Activated B cell treated with CpG ODN at 0.5 μM for 24 hours (primary cell): ENCODE measurements at regions of chr14 and their contacts with region 1.

Region 1: DNA sequence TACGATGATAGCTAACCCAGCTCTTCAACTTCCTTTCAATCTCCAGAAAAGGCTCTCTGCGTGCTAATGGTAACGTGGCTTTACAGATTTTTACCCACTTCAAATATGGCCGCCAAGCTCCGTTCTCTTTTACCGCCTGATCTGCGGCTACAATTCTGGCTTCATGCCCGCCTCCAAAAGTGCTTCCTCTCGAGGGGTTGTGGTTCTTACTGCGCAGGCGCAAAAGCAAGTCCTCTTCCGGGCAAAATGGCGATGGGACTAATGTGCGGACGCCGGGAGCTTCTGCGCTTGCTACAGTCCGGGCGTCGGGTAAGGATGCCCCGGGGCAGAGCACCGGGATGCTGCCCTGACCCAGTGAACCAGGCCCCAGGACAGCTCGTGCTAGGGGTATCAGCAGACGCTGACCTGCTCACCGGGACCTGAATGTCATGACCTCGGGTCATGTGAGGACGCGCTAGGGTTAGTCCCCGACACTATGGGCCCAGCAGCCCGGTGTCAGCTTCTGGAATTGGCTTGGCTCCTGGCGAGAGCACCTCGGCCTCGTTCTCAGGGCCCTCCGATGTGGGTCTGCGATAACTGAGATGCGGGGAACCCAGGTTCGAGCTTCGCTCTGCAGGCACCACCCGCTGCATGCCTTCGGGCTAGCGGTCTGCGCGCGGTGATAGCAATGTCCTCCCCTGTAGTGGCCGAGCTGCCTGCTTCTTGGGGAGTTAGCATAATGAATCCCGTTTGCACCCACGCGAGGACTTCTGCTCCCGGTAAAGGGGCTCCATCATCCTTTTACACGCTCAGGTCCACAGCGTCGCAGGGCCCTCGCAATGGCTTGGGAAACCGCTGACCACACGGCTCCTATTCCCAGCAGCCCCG is at the start of gene OXA1L:
- DNase-seq: peak; percentile 79
- ATAC-seq: peak; percentile 89
- H3K4me3 Mint-ChIP-seq: peak within 1 kb of the TSS; percentile 93
- H3K27ac Mint-ChIP-seq: peak within 1 kb of the TSS; percentile 97
- H3K4me1 Mint-ChIP-seq: peaks cover 35% of the 10 kb centered on the region
- H3K27me3 Mint-ChIP-seq: no peaks in the 10 kb centered on the region
- CTCF ChIP-seq: no peak
- total RNA-seq, gene OXA1L: 174 and 190 TPM in 2 replicates

Region 2: DNA sequence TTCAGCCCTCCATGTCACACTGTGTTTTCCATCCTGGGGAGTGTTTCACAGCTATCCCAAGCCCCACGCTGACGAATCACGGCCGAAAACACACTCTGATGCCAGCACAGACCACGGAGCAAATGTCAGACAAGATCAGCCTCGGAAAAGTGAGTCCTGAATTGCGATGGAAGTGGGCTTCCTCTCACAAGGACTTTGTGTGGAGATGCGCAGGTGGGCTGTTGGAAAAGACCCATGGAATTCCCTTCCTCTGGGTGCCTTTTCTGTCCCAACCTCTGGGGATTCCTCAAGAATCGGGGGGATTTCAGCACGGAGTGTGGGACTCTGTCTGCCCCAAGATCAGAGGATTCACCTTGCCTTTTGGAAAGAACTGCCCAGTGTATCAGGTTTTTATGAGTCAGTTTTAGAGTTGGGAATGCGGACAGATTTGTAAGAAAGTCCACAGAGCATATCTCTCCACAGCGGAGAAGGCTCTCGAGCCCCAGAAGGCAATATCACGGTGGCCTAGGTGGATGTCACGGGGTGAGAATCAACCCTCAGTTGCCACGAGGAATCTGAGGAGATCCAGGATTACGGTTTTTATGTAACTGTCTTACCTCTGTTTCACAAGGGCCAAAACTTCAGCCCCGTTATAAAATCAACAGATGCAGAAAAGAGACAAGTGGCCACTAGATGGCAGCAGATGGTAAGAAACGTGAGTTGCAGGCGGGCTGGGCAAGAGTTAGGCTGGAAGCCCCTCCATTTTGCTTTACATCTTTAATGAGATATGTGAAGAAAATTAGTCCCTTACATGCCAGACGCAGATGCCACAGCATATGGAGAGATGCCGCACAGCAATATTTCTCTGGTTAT is 379.5 kb before region 1 on chr14:
- CTCF ChIA-PET with region 1: no interaction called
- POLR2A ChIA-PET with region 1: interaction called, 6 read pairs
- intact Hi-C with region 1: loop called (anchors 5 kb)
- DNase-seq: peak; percentile 46
- ATAC-seq: peak; percentile 15
- H3K4me3 Mint-ChIP-seq: peak overlapping the region; percentile 24
- H3K27ac Mint-ChIP-seq: peak overlapping the region; percentile 98
- H3K4me1 Mint-ChIP-seq: peaks cover 78% of the 10 kb centered on the region
- H3K27me3 Mint-ChIP-seq: no peaks in the 10 kb centered on the region
- CTCF ChIP-seq: peak; percentile 18

Region 3: GRCh38 chr14:22748631-22749068 is 18.0 kb before region 1 on chr14:
- CTCF ChIA-PET with region 1: interaction called, 7 read pairs
- POLR2A ChIA-PET with region 1: interaction called, 8 read pairs
- intact Hi-C with region 1: loop called (anchors 2 kb)
- DNase-seq: peak; percentile 24
- ATAC-seq: peak; percentile 78
- H3K4me3 Mint-ChIP-seq: peak overlapping the region; percentile 78
- H3K27ac Mint-ChIP-seq: peak overlapping the region; percentile 99
- H3K4me1 Mint-ChIP-seq: peaks cover 23% of the 10 kb centered on the region
- H3K27me3 Mint-ChIP-seq: no peaks in the 10 kb centered on the region
- CTCF ChIP-seq: no peak

Region 4: GRCh38 chr14:22802860-22803686 is 36.4 kb after region 1 on chr14:
- CTCF ChIA-PET with region 1: interaction called, 3 read pairs
- POLR2A ChIA-PET with region 1: interaction called, 11 read pairs
- intact Hi-C with region 1: no loop called
- DNase-seq: no peak
- ATAC-seq: peak; percentile 87
- H3K4me3 Mint-ChIP-seq: peak overlapping the region; percentile 74
- H3K27ac Mint-ChIP-seq: peak overlapping the region; percentile 93
- H3K4me1 Mint-ChIP-seq: peaks cover 81% of the 10 kb centered on the region
- H3K27me3 Mint-ChIP-seq: no peaks in the 10 kb centered on the region
- CTCF ChIP-seq: no peak

Region 5: DNA sequence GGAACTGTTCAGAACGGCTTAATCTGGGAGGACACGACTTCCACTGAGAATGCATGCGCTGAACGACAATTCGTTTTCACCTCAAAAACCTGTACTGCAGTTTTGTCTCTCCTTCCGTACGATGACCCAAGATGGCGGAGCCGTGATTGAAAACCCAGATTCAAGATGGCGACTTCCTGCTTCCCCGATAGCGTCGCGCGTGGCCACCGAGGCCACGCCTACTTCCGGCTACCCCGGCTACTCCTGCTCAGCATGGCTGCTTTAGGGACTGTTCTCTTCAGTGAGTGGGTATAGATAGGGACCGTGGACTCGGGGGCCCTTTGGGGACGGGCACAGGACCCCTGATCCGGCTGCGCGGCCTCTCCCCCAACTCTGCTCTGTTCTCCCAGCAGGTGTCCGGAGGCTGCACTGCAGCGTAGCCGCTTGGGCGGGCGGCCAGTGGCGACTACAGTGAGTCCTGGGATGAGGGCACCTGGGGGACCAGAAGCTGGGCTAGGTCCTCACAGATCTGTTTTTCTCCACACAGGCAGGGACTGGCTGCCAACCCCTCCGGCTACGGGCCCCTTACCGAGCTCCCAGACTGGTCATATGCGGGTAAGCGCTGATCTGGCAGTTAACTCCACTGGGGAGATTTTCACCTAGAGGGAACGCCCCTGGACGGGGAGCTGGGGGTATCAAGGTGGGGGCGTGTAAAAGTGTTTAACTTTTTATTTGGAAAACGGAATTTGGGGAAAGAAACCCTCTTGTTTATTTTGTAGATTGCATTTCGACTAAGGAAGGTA is 63.2 kb after region 1 on chr14 and contains the start of gene MRPL52:
- CTCF ChIA-PET with region 1: interaction called, 4 read pairs
- POLR2A ChIA-PET with region 1: interaction called, 68 read pairs
- intact Hi-C with region 1: loop called (anchors 1 kb)
- DNase-seq: peak; percentile 76
- ATAC-seq: peak; percentile 94
- H3K4me3 Mint-ChIP-seq: peak within 1 kb of the TSS; percentile 93
- H3K27ac Mint-ChIP-seq: peak within 1 kb of the TSS; percentile 97
- H3K4me1 Mint-ChIP-seq: peaks cover 27% of the 10 kb centered on the region
- H3K27me3 Mint-ChIP-seq: no peaks in the 10 kb centered on the region
- CTCF ChIP-seq: no peak
- total RNA-seq, gene MRPL52: 142 and 150 TPM in 2 replicates

Region 6: DNA sequence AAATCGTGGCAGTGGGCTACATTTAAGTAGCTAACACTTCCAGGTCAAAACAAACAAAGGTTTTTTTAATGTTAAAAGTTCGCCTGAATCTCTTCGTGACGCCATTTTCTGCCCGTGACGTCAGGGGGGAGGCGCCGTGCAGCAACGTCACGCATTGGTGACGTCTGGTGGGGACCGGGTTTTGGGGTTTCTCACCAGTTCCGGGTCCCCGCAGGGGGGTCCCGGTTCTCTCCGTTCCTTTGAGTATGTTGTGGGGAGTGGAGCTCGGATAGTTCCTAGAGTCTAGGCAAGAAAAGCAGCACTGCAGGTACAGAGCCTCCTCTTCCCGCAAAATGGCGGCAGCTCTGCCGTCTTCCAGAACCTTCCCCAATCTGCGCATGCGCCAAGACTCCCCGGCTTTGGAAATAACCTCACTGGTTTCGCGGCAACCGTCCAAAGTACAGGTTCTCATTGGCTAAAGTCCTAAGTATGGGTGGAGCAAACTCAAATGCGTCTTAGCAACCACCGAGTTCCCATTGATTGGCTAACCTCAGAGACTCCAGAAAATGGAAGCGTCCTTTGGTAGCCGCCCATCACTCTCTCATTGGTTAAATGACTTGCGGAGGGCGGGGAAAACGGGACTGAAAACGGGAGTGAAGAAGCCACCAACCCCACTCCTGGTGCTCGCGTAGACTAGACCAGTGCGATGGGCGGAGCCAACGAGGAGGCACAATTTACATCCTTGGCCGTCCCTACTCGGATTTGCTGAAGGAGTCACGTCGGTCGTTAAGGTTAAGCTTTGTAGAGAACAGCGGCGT is 152.3 kb after region 1 on chr14 and contains the start of gene RBM23:
- CTCF ChIA-PET with region 1: no interaction called
- POLR2A ChIA-PET with region 1: interaction called, 11 read pairs
- intact Hi-C with region 1: loop called (anchors 5 kb)
- DNase-seq: peak; percentile 94
- ATAC-seq: peak; percentile 94
- H3K4me3 Mint-ChIP-seq: peak within 1 kb of the TSS; percentile 99
- H3K27ac Mint-ChIP-seq: peak within 1 kb of the TSS; percentile 100
- H3K4me1 Mint-ChIP-seq: peaks cover 53% of the 10 kb centered on the region
- H3K27me3 Mint-ChIP-seq: no peaks in the 10 kb centered on the region
- CTCF ChIP-seq: no peak
- total RNA-seq, gene RBM23: 130 and 131 TPM in 2 replicates